Ovary (tissue), 10 donors: ENCODE measurements at regions of chr11 and their contacts with region 1.

Region 1: GRCh38 chr11:45655347-45655756 is 10.1 kb downstream of the CHST1 start:
- DNase-seq: peak; percentile 65 to 87 (median 83)
- H3K4me3 ChIP-seq: no peak overlapping the region
- H3K27ac ChIP-seq: no peak overlapping the region
- H3K4me1 ChIP-seq: peaks cover 14% of the 10 kb centered on the region
- H3K27me3 ChIP-seq: no peaks in the 10 kb centered on the region
- CTCF ChIP-seq: peak; percentile 65 to 87 (median 74)
- EP300 ChIP-seq: no peak
- POLR2A ChIP-seq: no peak

Region 2: GRCh38 chr11:45371251-45372115 is 283.9 kb before region 1 on chr11:
- intact Hi-C with region 1: loop called in 2 of 4 experiments (anchors 10 kb)
- DNase-seq: peak; percentile 45 to 82 (median 71)
- H3K4me3 ChIP-seq: no peak overlapping the region
- H3K27ac ChIP-seq: no peak overlapping the region
- H3K4me1 ChIP-seq: no peaks in the 10 kb centered on the region
- H3K27me3 ChIP-seq: no peaks in the 10 kb centered on the region
- CTCF ChIP-seq: peak; percentile 52 to 70 (median 58)
- EP300 ChIP-seq: no peak
- POLR2A ChIP-seq: no peak

Region 3: DNA sequence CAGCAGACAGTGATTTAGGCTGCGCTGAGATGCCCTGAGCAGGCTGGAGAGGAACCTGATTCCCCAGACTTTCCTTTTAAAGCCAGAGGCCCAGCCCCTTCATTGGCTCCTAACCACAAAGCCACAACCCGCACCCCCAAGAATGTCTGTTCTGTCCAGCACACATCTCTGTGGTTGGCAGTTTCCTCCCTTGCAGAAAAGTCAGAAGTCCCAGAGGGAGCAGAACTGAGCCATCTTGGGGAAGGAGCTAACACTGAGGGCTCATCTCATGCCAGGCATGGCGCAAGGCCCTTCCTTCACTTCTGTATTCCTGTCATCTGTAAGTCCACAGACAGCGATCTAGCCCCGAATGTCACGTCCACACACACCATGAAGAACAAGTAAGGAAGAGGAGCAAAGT is 272.1 kb before region 1 on chr11:
- intact Hi-C with region 1: loop called in 3 of 4 experiments (anchors 10 kb)
- DNase-seq: no peak
- H3K4me3 ChIP-seq: no peak overlapping the region
- H3K27ac ChIP-seq: no peak overlapping the region
- H3K4me1 ChIP-seq: peaks cover 7% of the 10 kb centered on the region
- H3K27me3 ChIP-seq: no peaks in the 10 kb centered on the region
- CTCF ChIP-seq: no peak
- EP300 ChIP-seq: no peak
- POLR2A ChIP-seq: no peak

Region 4: DNA sequence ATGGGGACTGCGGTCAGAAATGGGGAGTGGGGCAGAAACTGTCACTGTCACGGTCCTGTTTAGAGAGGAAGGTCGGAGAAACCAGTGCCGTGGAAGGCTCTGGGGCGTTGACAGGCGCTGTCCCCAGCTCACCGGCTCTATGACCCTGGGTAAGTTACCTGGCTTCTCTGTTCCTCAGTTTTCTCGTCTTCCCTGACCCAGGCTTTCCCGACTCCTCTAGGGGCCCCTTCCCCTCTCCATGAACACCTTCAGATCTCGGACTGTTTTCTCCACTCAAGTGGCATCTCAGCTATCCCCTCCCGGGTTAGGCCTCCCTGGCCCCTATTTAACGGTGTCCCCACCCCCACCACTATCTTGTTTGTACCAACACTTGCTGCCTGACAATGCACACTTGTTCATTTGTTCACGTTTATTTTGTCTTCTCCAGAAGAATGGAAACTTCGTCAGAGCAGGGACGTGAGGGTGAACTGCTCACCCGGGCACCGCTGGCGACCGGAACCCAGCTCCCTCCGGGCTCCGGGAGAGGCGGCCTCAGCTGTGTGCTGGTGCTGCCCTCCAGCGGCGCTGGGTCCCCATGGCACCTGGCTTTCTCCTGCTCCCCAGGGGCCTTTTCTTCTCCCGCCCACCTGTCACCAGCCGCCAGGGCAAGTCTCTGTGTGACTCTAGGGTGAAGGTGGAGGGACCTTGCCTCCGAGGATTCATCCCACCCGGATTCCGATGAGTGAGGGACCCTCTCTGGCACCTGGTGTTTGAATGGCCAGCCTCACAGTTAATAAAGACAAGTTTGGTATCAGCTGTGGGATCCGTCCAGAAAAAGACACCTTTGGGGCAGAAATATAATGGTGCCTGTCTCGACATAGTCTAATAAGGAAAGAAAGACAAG is 116.5 kb after region 1 on chr11:
- intact Hi-C with region 1: loop called in 2 of 4 experiments (anchors 5 kb)
- DNase-seq: peak; percentile 77 to 89 (median 84)
- H3K4me3 ChIP-seq: peak overlapping the region; percentile 36
- H3K27ac ChIP-seq: peak overlapping the region; percentile 17 to 56
- H3K4me1 ChIP-seq: no peaks in the 10 kb centered on the region
- H3K27me3 ChIP-seq: no peaks in the 10 kb centered on the region
- CTCF ChIP-seq: peak; percentile 86 to 91 (median 87)
- EP300 ChIP-seq: no peak
- POLR2A ChIP-seq: no peak